CD4-positive, alpha-beta T cell (primary cell): ENCODE measurements at regions of chr11 and their contacts with region 1.

Region 1: DNA sequence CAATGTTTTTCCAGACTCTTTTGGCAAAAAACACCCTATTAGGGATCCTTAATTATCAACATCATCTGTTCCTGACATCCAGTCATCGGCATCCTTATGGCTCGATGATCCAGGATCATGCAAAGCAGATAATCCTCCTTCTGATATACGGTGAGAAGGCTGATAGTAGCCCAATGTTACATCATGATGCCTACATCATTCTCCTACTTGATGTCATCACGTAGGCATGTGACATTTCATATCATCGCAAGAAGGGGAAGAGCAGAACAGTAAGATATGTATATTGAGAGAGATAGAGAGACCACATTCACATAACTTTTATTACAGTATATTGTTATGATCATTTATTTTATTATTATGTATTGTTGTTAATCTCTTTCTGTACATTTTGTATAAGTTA is 168.6 kb downstream of the ADAMTS15 start:
- DNase-seq: peak in 1 of 14 experiments; percentile 9
- ATAC-seq: no peak
- H3K4me3 ChIP-seq: no peak overlapping the region
- H3K4me3 Mint-ChIP-seq: no peak overlapping the region
- H3K27ac ChIP-seq: no peak overlapping the region
- H3K27ac Mint-ChIP-seq: no peak overlapping the region
- H3K4me1 ChIP-seq: no peaks in the 10 kb centered on the region
- H3K4me1 Mint-ChIP-seq: no peaks in the 10 kb centered on the region
- H3K27me3 ChIP-seq: peaks cover 0 to 2% of the 10 kb centered on the region in 2 experiments
- H3K27me3 Mint-ChIP-seq: peaks cover 6% of the 10 kb centered on the region
- CTCF ChIP-seq: no peak

Region 2: DNA sequence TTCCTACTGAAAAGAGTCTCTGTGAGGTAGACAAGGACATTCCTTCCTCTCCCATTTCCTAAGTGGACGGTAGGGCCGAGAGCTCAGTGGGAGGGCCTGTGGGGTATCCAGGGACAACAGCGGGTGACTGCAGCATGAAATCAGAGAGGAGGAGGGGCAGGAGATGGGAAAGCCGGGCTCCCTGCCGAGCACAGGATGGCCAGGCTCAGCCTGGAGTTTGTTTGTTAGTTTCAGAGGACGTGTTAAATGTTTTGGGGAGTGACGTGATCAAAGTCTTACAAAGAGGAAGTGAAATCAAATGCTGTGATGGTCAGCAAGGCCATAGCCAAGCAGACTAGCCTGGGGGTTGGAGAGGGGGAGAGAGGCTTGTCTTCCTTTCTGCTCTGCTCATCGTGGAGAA is 15.9 kb before region 1 on chr11:
- CTCF ChIA-PET with region 1: no interaction called
- POLR2A ChIA-PET with region 1: no interaction called
- intact Hi-C with region 1: loop called in 1 of 2 experiments (anchors 1 kb)
- DNase-seq: no peak
- ATAC-seq: no peak
- H3K4me3 ChIP-seq: no peak overlapping the region
- H3K4me3 Mint-ChIP-seq: no peak overlapping the region
- H3K27ac ChIP-seq: no peak overlapping the region
- H3K27ac Mint-ChIP-seq: no peak overlapping the region
- H3K4me1 ChIP-seq: no peaks in the 10 kb centered on the region
- H3K4me1 Mint-ChIP-seq: no peaks in the 10 kb centered on the region
- H3K27me3 ChIP-seq: no peaks in the 10 kb centered on the region
- H3K27me3 Mint-ChIP-seq: no peaks in the 10 kb centered on the region
- CTCF ChIP-seq: no peak